ENCODE measurements at regions of chr20 and their contacts with region 1.

Region 1: GRCh38 chr20:63056236-63056948 is 49.6 kb upstream of the BHLHE23 start:
- DNase-seq: peak in 3 of 5 donors; percentile 18 to 66 (median 34)
- ATAC-seq: peak in 3 of 4 donors; percentile 30 to 67 (median 38)
- H3K4me3 ChIP-seq: no peak overlapping the region
- H3K27ac ChIP-seq: no peak overlapping the region
- H3K4me1 ChIP-seq: peaks cover 0 to 7% (median 0%) of the 10 kb centered on the region in 12 donors
- H3K27me3 ChIP-seq: peaks cover 5 to 74% (median 27%) of the 10 kb centered on the region in 9 donors
- CTCF ChIP-seq: peak; percentile 80 to 97 (median 89)
- POLR2A ChIP-seq: no peak

Region 2: DNA sequence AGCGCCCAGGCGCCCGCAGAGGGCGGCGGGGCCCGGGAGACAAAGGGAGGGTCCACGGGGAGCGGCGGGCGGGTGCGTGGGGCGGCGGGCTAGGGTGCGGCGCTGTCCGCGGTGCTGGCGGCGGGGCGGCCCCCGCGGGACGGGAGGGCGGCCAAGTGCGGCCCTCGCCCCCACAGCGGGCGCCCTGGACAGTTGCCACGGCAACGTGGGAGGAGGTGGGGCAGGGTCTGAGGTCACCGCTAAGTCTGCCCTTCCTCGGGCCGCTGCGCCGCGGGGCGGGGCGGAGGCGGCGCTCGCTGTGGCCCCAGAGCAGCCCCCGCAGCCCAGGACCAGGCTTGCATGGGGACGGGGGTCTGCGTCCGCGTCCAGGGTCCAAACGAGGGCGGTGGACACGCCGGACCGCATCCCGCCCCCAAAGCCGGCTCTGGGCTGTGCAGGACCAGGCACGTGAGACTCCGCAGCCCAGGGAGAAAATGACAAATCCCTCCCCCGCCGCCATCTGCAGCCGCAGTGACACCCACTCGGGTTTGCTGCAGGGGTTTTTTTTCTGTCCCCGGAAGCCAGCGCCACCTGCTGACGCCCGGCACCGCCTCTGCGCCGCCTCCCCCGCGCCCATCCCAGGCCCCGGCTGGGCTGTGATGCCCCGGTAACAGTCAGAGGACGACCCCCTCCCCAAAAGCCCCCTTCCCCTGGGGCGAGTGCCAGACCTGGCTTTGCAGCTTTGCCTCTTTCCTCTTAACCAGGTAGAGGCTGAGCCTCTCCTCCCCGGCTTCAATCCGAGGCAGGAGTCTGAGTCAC is 122.7 kb after region 1 on chr20:
- intact Hi-C with region 1: loop called (anchors 1 to 10 kb)
- DNase-seq: peak in 3 of 5 donors; percentile 33 to 42 (median 36)
- ATAC-seq: peak in 2 of 4 donors; percentile 22 to 62
- H3K4me3 ChIP-seq: peak overlapping the region in 10 of 12 donors; percentile 11 to 46 (median 32)
- H3K27ac ChIP-seq: no peak overlapping the region
- H3K4me1 ChIP-seq: peaks cover 0 to 41% (median 18%) of the 10 kb centered on the region in 12 donors
- H3K27me3 ChIP-seq: peaks cover 62 to 97% (median 77%) of the 10 kb centered on the region in 9 donors
- CTCF ChIP-seq: peak; percentile 25 to 69 (median 48)
- POLR2A ChIP-seq: no peak

Region 3: GRCh38 chr20:63230800-63231268 is 174.4 kb after region 1 on chr20:
- intact Hi-C with region 1: loop called in 3 of 10 experiments (anchors 5 to 10 kb)
- DNase-seq: peak in 4 of 5 donors; percentile 50 to 70 (median 70)
- ATAC-seq: peak in 3 of 4 donors; percentile 79 to 83 (median 80)
- H3K4me3 ChIP-seq: no peak overlapping the region
- H3K27ac ChIP-seq: no peak overlapping the region
- H3K4me1 ChIP-seq: peaks cover 0 to 11% (median 0%) of the 10 kb centered on the region in 12 donors
- H3K27me3 ChIP-seq: peaks cover 0 to 33% (median 8%) of the 10 kb centered on the region in 9 donors
- CTCF ChIP-seq: peak in 11 of 12 donors; percentile 18 to 68 (median 50)
- POLR2A ChIP-seq: no peak

Region 4: DNA sequence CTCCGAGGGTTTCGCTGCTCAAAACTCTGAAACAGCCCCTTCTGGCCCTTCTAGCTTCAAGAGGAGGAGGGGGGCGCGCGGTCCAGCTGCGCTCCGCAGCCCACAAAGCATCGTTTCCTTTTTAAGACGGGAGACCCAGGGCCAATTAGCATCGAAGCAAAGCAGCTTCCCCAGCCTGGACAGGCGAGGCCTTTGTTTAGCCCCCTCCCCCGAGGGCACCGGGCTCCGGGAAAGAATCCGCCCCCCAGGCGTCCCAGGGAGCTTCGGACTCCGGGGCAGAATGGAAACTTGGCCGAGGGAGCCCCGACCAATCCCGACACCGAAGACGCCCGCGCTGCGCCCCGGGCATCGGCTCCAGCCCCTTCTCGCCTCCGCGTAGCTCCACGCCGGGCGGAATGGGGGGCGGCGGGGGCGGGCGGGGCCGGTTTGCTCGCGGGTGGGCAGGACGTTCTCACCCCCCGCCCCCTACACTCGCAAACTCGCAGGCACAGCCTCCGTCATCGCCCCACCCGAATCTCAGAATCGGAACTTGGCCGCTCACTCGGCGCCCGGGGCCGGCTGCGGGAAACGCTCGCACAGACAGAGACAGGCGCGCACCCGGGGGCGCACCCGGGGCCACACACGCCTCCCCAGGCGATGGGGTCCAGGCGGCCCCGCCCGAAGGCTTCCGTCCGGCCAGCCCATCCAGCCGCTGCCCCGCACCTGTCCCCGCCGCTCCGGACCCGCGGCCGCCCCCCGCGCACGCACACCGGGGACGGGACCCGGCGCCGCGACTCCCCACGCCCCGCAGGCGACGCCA is 197.2 kb after region 1 on chr20:
- intact Hi-C with region 1: loop called in 1 of 10 experiments (anchors 5 kb)
- DNase-seq: peak in 1 of 5 donors; percentile 58
- ATAC-seq: peak in 1 of 4 donors; percentile 29
- H3K4me3 ChIP-seq: peak overlapping the region; percentile 7 to 48 (median 34)
- H3K27ac ChIP-seq: no peak overlapping the region
- H3K4me1 ChIP-seq: peaks cover 0 to 21% (median 4%) of the 10 kb centered on the region in 12 donors
- H3K27me3 ChIP-seq: peaks cover 32 to 78% (median 59%) of the 10 kb centered on the region in 9 donors
- CTCF ChIP-seq: no peak
- POLR2A ChIP-seq: no peak

Region 5: GRCh38 chr20:63381807-63382322 is 325.5 kb after region 1 on chr20:
- intact Hi-C with region 1: loop called in 1 of 10 experiments (anchors 10 kb)
- DNase-seq: no peak
- ATAC-seq: peak in 3 of 4 donors; percentile 44 to 64 (median 47)
- H3K4me3 ChIP-seq: no peak overlapping the region
- H3K27ac ChIP-seq: no peak overlapping the region
- H3K4me1 ChIP-seq: peaks cover 0 to 4% (median 0%) of the 10 kb centered on the region in 12 donors
- H3K27me3 ChIP-seq: peaks cover 2 to 64% (median 20%) of the 10 kb centered on the region in 9 donors
- CTCF ChIP-seq: peak; percentile 80 to 97 (median 93)
- POLR2A ChIP-seq: no peak

Measured in heart left ventricle (tissue), 16 donors.